ENCODE measurements at regions of chr1 and their contacts with region 1.

Region 1: DNA sequence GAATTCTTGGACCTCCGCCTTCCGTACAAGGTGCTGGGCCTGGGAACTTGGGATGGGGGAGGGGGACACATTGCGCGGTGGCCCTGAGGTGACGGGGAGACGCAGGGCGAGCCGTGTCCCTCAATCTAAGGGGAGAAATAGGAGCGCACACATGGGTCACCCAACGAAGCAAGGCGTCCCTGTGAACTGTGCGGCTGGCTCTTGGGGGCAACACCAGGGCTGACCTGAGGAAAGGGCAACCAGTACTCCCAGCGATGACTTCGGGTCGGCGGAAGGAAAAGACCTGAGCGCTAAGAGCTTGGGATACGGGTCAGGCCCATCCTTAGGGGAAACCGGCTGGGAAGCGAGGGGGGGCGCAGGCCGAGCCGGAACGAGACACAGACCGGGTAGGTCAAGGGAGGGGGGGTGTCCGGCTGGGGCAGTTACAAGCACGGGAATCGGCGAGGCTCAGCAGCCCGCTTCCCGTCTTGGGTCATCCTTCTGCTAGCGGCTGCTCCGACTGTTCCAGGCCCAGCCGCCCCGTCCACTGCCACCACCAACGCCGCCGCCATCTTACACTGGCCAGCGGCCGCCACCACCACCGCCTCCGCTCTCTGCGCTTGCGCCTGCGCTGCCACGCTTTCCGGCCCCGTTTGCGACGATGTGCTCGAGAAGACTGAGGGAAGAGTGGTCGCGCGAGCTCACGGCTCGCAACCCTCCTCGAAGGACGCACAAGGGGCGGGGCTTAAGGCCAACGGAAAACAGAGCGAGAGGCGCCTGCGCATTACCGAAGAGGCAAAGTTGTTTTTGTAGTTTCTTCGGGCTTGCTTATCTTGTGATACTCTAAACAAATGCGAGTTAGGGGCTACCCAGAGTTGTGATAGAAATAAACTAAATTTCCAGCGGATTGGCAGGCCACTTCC is at the start of gene DCAF8:
- DNase-seq: peak; percentile 98 to 99
- ATAC-seq: peak; percentile 84 to 97 (median 91)
- H3K4me3 ChIP-seq: peak within 1 kb of the TSS; percentile 91
- H3K4me3 Mint-ChIP-seq: peak within 1 kb of the TSS; percentile 100
- H3K27ac ChIP-seq: peak within 1 kb of the TSS; percentile 95
- H3K27ac Mint-ChIP-seq: peak within 1 kb of the TSS; percentile 99 to 100
- H3K4me1 ChIP-seq: peaks cover 14% of the 10 kb centered on the region
- H3K4me1 Mint-ChIP-seq: peaks cover 18 to 35% of the 10 kb centered on the region in 2 donors
- H3K27me3 ChIP-seq: no peaks in the 10 kb centered on the region
- H3K27me3 Mint-ChIP-seq: peaks cover 0 to under 1% of the 10 kb centered on the region in 2 donors
- CTCF ChIP-seq: no peak
- total RNA-seq, gene DCAF8: 189 to 201 (median 189) TPM

Region 2: GRCh38 chr1:159924981-159925712 is 337.0 kb before region 1 on chr1 and contains the start of gene TAGLN2:
- intact Hi-C with region 1: loop called (anchors 5 kb)
- DNase-seq: peak; percentile 93 to 94
- ATAC-seq: peak; percentile 54 to 76 (median 64)
- H3K4me3 ChIP-seq: peak within 1 kb of the TSS; percentile 97
- H3K4me3 Mint-ChIP-seq: peak within 1 kb of the TSS; percentile 94
- H3K27ac ChIP-seq: peak within 1 kb of the TSS; percentile 98
- H3K27ac Mint-ChIP-seq: peak within 1 kb of the TSS; percentile 93 to 98
- H3K4me1 ChIP-seq: peaks cover 53% of the 10 kb centered on the region
- H3K4me1 Mint-ChIP-seq: peaks cover 56 to 67% of the 10 kb centered on the region in 2 donors
- H3K27me3 ChIP-seq: no peaks in the 10 kb centered on the region
- H3K27me3 Mint-ChIP-seq: peaks cover 0 to 8% of the 10 kb centered on the region in 2 donors
- CTCF ChIP-seq: no peak
- total RNA-seq, gene TAGLN2: 344 to 394 (median 358) TPM

Region 3: DNA sequence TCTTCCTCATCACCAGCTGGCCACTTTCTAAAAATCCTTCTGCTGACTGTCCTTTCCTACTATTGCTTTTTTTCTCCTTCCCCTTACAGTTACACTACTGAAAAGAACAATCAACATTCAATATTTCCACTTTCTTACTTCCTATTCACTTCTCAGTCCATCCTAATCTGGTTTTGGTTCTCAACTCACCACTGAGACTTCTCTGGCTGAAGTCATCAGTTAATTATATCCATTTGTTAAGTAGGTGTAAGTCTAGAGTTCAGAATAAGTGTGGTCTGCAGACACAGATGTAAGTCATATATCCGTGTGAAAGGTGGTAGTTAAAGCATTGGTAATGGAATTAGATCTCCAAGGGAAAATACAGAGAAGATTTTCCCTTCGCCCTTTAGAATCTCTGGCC is 35.5 kb before region 1 on chr1:
- intact Hi-C with region 1: no loop called
- DNase-seq: no peak
- ATAC-seq: no peak
- H3K4me3 ChIP-seq: no peak overlapping the region
- H3K4me3 Mint-ChIP-seq: no peak overlapping the region
- H3K27ac ChIP-seq: no peak overlapping the region
- H3K27ac Mint-ChIP-seq: no peak overlapping the region
- H3K4me1 ChIP-seq: no peaks in the 10 kb centered on the region
- H3K4me1 Mint-ChIP-seq: no peaks in the 10 kb centered on the region
- H3K27me3 ChIP-seq: no peaks in the 10 kb centered on the region
- H3K27me3 Mint-ChIP-seq: no peaks in the 10 kb centered on the region
- CTCF ChIP-seq: no peak

Region 4: GRCh38 chr1:160284782-160285344 is 22.7 kb after region 1 on chr1 and contains the start of gene PEX19:
- intact Hi-C with region 1: loop called (anchors 1 kb)
- DNase-seq: peak; percentile 93 to 96
- ATAC-seq: peak; percentile 100
- H3K4me3 ChIP-seq: peak within 1 kb of the TSS; percentile 94
- H3K4me3 Mint-ChIP-seq: peak within 1 kb of the TSS; percentile 98
- H3K27ac ChIP-seq: peak within 1 kb of the TSS; percentile 76
- H3K27ac Mint-ChIP-seq: peak within 1 kb of the TSS; percentile 87 to 97
- H3K4me1 ChIP-seq: peaks cover 23% of the 10 kb centered on the region
- H3K4me1 Mint-ChIP-seq: peaks cover 25 to 26% of the 10 kb centered on the region in 2 donors
- H3K27me3 ChIP-seq: no peaks in the 10 kb centered on the region
- H3K27me3 Mint-ChIP-seq: no peaks in the 10 kb centered on the region
- CTCF ChIP-seq: no peak
- total RNA-seq, gene PEX19: 41.5 to 48.8 (median 47.8) TPM

Region 5: GRCh38 chr1:160342953-160343869 is 81.1 kb after region 1 on chr1 and contains the starts of genes COPA and NCSTN:
- intact Hi-C with region 1: loop called (anchors 1 kb)
- DNase-seq: peak; percentile 83 to 96
- ATAC-seq: peak; percentile 95 to 99 (median 96)
- H3K4me3 ChIP-seq: peak within 1 kb of the TSS; percentile 89
- H3K4me3 Mint-ChIP-seq: peak within 1 kb of the TSS; percentile 100
- H3K27ac ChIP-seq: peak within 1 kb of the TSS; percentile 93
- H3K27ac Mint-ChIP-seq: peak within 1 kb of the TSS; percentile 99 to 100
- H3K4me1 ChIP-seq: peaks cover 16% of the 10 kb centered on the region
- H3K4me1 Mint-ChIP-seq: peaks cover 40 to 45% of the 10 kb centered on the region in 2 donors
- H3K27me3 ChIP-seq: no peaks in the 10 kb centered on the region
- H3K27me3 Mint-ChIP-seq: no peaks in the 10 kb centered on the region
- CTCF ChIP-seq: no peak
- total RNA-seq, gene COPA: 140 to 167 (median 148) TPM
- total RNA-seq, gene NCSTN: 104 to 140 (median 110) TPM

Region 6: DNA sequence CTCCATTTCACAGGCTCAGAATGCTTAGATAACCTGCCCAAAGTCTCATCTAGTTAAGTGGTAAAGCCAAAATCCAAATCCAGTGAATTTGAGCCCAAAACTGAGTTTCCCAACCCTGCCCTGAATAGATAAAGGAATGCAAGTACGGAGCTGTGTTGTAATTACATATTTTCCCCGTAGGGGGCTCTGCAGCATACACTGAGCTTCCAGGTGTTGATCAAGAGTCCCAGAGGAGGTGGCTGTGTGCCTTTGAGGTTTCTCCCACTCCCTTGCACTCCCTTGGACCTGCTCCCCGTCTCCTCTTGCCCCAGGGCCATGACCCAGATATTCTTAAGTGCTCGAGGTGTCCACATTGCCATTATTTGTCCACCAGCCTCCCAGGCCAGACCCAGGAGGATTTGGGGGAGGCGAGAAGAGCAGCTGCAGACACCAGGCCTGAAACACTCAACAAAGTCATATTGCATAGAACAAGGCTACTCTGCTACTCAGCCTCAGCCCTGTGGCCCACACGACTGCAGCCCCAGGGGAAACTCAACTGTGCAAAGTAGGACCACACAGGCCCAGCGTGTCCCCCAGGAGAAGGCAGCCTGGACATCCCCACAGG is 515.4 kb after region 1 on chr1:
- intact Hi-C with region 1: no loop called
- DNase-seq: peak in 1 of 2 donors; percentile 81
- ATAC-seq: peak; percentile 57 to 80 (median 68)
- H3K4me3 ChIP-seq: no peak overlapping the region
- H3K4me3 Mint-ChIP-seq: no peak overlapping the region
- H3K27ac ChIP-seq: no peak overlapping the region
- H3K27ac Mint-ChIP-seq: no peak overlapping the region
- H3K4me1 ChIP-seq: peaks cover 14% of the 10 kb centered on the region
- H3K4me1 Mint-ChIP-seq: peaks cover 0 to 12% of the 10 kb centered on the region in 2 donors
- H3K27me3 ChIP-seq: no peaks in the 10 kb centered on the region
- H3K27me3 Mint-ChIP-seq: no peaks in the 10 kb centered on the region
- CTCF ChIP-seq: peak; percentile 53

Measured in natural killer cell (primary cell).